Panc1 (cell line): ENCODE measurements at regions of chr1 and their contacts with region 1.

Region 1: GRCh38 chr1:61670016-61670415 is 54.9 kb downstream of the TM2D1 start:
- DNase-seq: no peak
- ATAC-seq: no peak
- H3K4me3 ChIP-seq: no peak overlapping the region
- H3K27ac ChIP-seq: no peak overlapping the region
- H3K4me1 ChIP-seq: no peaks in the 10 kb centered on the region
- H3K27me3 ChIP-seq: no peaks in the 10 kb centered on the region
- CTCF ChIP-seq: no peak

Region 2: DNA sequence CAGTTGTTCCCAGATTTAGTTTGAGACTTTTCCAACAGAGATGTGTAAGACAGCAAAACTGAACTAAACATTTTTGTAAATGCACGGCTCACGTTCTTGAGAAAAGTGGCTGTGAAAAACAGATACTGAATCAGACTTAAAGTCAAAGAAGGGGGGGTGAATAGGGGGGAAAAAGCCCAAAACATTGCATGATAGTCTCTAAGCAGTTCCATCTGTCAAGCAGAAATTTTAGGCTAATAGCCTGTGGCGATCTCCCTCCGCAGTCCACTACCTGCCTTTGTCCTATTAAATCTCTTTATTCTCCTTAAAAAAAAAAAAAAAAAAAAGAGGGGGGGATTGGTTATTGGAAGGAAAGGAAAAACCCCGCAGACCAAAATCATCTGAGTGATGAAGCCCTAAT is 805.3 kb before region 1 on chr1:
- CTCF ChIA-PET with region 1: interaction called, 11 read pairs
- POLR2A ChIA-PET with region 1: no interaction called
- in situ Hi-C with region 1: no loop called
- intact Hi-C with region 1: no loop called
- DNase-seq: no peak
- ATAC-seq: no peak
- H3K4me3 ChIP-seq: no peak overlapping the region
- H3K27ac ChIP-seq: no peak overlapping the region
- H3K4me1 ChIP-seq: no peaks in the 10 kb centered on the region
- H3K27me3 ChIP-seq: peaks cover 34% of the 10 kb centered on the region
- CTCF ChIP-seq: no peak

Region 3: DNA sequence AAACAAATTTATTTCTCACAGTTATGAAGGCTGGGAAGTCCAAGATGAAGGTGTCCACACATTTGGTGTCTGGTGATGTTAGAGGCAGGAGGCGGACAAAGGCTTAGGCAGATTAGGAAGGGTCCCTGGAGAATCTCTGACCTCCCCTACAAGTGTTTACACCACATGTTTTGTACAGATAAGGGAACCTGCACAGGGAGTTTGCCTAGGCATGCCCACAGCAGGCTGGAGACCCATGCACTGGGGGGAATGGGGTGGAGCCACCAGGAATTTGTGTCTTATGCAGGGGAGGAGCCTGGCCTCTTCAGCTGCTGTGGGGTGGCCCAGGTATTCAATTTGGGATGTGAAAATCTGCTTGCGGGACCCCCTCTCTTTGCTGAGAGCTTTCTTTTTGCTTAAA is 203.6 kb after region 1 on chr1:
- CTCF ChIA-PET with region 1: no interaction called
- POLR2A ChIA-PET with region 1: no interaction called
- in situ Hi-C with region 1: no loop called
- intact Hi-C with region 1: no loop called
- DNase-seq: no peak
- ATAC-seq: no peak
- H3K4me3 ChIP-seq: no peak overlapping the region
- H3K27ac ChIP-seq: no peak overlapping the region
- H3K4me1 ChIP-seq: no peaks in the 10 kb centered on the region
- H3K27me3 ChIP-seq: no peaks in the 10 kb centered on the region
- CTCF ChIP-seq: no peak